Calu3 (cell line): ENCODE measurements at regions of chr2 and their contacts with region 1.

Region 1: DNA sequence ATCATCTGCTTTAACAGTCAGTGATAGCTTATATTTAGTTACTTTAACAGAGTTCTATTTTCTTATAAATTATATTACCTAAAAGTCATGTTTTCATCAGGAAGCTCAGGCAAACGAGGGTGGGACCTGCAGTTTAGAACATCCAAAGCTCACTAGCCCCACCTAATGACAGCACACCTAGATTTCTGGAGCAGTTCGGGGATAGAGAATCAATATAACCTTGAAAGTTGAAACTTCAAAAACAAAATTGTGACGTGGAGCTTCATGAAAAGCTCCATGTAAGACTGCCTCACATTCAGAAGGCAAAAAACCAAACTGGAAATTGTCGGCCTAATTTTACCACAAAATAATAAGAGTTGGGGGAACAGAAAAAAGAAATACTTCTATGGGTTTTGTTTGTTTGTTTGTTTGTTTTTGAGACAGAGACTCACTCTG is 185.9 kb upstream of the CCDC150 start:
- DNase-seq: peak; percentile 66
- H3K4me3 Mint-ChIP-seq: no peak overlapping the region
- H3K27ac Mint-ChIP-seq: no peak overlapping the region
- H3K4me1 Mint-ChIP-seq: no peaks in the 10 kb centered on the region
- H3K27me3 Mint-ChIP-seq: no peaks in the 10 kb centered on the region
- CTCF ChIP-seq: peak; percentile 75

Region 2: DNA sequence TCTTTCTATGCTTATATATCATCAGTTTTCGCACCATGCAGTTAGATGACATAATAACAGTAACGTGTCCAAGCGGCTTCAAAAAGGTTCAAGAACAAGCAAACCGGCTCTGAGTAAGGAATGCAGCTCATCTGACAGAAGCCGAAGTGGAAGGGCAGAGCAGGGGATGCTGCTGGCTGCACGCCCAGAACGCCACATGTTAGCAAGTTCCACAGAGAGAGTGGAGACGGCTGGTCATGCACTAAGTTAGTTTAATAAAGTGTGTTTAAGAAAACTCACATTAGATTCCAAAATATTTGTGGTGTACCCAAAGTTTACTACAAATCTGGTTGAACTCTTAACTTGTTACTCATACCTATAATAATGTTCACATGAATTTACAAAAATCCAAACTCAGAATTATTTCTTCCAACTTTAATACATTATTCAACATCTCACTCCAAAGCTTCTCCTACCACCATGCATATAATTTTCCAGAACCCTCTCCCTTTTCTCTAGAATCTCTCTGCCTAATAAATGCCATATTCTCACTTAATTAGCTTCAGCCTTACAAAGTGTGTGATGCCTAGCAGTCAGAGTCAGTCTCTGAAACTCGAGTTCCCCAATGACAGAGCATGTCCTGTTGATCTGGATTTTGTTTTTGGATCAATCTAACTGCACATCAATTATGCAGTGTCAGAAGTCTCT is 555.0 kb before region 1 on chr2:
- CTCF ChIA-PET with region 1: no interaction called
- intact Hi-C with region 1: no loop called
- DNase-seq: no peak
- H3K4me3 Mint-ChIP-seq: no peak overlapping the region
- H3K27ac Mint-ChIP-seq: no peak overlapping the region
- H3K4me1 Mint-ChIP-seq: no peaks in the 10 kb centered on the region
- H3K27me3 Mint-ChIP-seq: no peaks in the 10 kb centered on the region
- CTCF ChIP-seq: no peak

Region 3: DNA sequence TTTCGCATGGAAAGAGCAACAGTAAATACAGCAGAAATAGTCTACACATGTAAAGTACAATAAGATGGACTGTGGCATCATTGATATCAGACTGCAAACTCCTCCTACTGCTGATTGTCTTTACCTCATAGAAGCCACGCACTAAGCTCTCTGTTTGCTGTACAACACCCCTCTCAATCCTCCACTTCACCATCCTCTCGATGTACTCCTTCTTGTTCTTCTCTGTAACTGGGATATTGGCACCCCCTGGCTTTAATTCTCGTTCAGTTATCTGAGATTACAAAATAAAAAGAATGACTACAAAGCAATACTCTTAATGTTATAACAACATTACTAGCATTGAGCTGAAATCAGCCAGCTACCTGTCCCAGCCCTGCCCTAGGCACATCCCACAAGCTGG is 233.0 kb before region 1 on chr2:
- CTCF ChIA-PET with region 1: no interaction called
- intact Hi-C with region 1: no loop called
- DNase-seq: no peak
- H3K4me3 Mint-ChIP-seq: no peak overlapping the region
- H3K27ac Mint-ChIP-seq: no peak overlapping the region
- H3K4me1 Mint-ChIP-seq: peaks cover 8% of the 10 kb centered on the region
- H3K27me3 Mint-ChIP-seq: no peaks in the 10 kb centered on the region
- CTCF ChIP-seq: no peak

Region 4: DNA sequence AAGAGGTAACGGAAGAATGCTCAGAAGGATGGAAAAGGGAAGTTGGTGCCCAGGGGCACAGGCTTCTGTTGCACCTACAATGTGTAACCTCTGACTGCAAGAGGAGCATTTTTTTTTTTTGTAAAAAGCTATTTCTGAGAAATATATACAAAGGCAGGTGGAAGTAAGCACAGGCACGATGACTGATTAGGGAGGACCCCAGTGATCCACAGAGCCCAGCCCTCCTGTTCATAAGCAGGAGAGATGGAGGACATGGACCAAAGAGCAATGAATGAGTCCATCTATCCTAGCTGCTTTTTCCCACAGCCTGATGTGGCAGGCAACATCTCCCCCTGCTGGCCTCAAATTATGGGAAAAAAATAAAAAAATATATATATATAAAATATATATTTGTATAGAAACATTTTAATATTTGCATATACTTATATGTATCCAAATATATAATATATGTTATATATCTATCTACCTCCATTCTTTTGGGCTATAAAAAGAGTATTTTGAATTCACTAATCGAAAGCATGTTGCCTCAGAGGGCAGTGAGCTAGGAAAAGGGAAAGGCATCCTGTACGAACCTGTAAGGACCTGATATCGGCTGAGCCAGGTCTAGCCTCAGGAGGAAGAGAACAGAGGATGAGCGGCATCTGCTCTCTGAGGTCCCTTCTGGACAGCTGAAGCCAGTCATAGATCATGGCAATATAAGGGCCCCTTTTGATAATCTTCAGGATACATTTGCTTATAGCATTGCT is 116.2 kb before region 1 on chr2:
- CTCF ChIA-PET with region 1: interaction called, 9 read pairs
- intact Hi-C with region 1: loop called (anchors 5 kb)
- DNase-seq: peak; percentile 34
- H3K4me3 Mint-ChIP-seq: no peak overlapping the region
- H3K27ac Mint-ChIP-seq: no peak overlapping the region
- H3K4me1 Mint-ChIP-seq: peaks cover 34% of the 10 kb centered on the region
- H3K27me3 Mint-ChIP-seq: no peaks in the 10 kb centered on the region
- CTCF ChIP-seq: peak; percentile 64

Region 5: DNA sequence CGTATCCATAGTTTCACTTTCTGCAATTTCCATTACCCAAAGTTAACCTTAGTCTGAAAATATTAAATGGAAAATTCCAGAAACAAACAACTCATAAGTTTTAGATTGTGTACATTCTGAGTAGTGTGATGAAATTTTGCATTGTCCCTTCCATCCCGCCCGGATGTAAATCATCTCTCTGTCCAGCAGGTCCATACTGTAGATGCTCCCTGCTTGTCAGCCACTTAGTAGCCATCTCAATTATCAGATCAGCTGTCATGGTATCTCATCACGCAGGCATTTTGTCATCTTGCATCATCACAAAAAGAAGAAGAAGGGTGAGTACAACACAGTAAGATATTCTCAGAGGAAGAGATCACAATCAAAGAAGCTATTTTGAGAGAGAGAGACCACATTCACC is 97.3 kb before region 1 on chr2:
- CTCF ChIA-PET with region 1: no interaction called
- intact Hi-C with region 1: no loop called
- DNase-seq: no peak
- H3K4me3 Mint-ChIP-seq: no peak overlapping the region
- H3K27ac Mint-ChIP-seq: no peak overlapping the region
- H3K4me1 Mint-ChIP-seq: no peaks in the 10 kb centered on the region
- H3K27me3 Mint-ChIP-seq: no peaks in the 10 kb centered on the region
- CTCF ChIP-seq: no peak

Region 6: DNA sequence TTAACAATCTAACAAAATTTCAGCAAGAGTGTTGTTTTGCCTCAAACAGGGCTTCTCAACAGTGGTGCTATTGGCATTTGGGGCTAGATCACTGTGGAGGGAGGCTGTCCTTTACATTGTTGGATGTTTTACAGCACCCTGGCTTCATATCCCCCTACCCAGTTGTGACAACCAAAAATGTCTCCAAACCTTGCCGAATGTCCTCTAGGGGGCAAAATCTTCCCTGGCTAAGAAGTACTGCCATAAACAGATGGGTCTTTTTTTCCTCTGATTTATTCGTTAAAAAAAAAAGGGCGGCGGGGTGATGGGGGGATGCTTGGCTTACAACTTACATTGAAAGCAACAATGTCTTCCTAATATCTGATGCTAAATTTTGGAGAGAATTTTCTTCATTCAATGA is 21.7 kb before region 1 on chr2:
- CTCF ChIA-PET with region 1: no interaction called
- intact Hi-C with region 1: loop called (anchors 2 kb)
- DNase-seq: peak; percentile 19
- H3K4me3 Mint-ChIP-seq: no peak overlapping the region
- H3K27ac Mint-ChIP-seq: no peak overlapping the region
- H3K4me1 Mint-ChIP-seq: peaks cover 11% of the 10 kb centered on the region
- H3K27me3 Mint-ChIP-seq: no peaks in the 10 kb centered on the region
- CTCF ChIP-seq: peak; percentile 43